HEK293 (cell line): ENCODE measurements at regions of chr22 and their contacts with region 1.

Region 1: DNA sequence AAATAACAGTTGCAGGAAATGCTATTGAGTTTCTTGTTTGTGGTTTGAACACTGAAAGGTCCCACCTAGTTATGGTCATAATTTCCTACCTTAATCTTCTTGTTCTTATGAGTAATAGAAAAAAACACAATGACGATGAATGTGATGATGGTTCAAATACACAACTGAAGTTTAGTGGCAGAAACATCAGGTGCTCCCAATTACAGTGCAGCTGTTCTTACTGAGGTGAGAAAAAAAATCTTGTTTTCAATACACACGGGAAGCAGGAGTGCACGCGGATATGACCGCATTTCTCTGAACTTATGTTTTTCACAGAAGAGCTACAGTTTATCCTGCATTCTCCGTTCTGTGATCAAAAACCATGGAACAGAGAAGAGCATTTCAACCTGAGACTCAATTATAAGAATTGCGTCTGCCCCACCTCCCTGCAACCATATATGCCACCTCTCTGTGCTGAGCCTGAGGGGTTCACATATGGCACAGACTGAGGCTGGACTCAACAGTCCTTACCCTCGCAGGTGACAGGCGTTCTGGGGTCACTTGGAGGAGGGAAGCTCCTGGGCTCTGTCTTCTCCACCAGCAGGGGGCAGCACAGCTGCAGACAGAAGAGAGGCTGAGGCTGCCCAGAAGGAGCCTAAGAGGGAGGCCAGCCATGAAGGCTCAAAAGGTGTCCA is 99.7 kb upstream of the IGLL5 start:
- H3K4me3 ChIP-seq: no peak overlapping the region
- H3K27ac ChIP-seq: no peak overlapping the region
- H3K4me1 ChIP-seq: no peaks in the 10 kb centered on the region
- CTCF ChIP-seq: 0 out of 2 replicates have a peak, but pooled peaks have one; percentile 38

Region 2: DNA sequence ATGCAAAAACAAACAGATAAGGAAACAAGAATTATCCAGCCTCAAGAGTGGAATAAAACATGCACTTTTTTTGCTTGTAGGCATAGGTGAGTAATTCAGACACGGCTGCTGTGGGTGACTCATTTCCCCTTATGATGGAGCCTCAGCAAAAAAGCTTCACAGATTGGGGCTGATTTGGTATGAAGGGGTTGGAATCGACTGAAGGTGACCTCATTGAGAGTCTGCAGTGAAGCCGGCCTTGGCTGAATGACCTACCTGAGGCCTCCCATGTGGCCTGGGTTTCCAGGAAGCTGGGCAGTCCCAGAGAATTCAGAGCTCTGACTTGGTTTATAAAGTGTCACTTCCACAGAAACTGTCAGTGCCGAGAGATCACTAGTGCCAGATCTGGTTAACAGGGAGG is 577.5 kb before region 1 on chr22:
- CTCF ChIA-PET with region 1: no interaction called
- POLR2A ChIA-PET with region 1: no interaction called
- H3K4me3 ChIP-seq: no peak overlapping the region
- H3K27ac ChIP-seq: no peak overlapping the region
- H3K4me1 ChIP-seq: no peaks in the 10 kb centered on the region
- CTCF ChIP-seq: no peak

Region 3: DNA sequence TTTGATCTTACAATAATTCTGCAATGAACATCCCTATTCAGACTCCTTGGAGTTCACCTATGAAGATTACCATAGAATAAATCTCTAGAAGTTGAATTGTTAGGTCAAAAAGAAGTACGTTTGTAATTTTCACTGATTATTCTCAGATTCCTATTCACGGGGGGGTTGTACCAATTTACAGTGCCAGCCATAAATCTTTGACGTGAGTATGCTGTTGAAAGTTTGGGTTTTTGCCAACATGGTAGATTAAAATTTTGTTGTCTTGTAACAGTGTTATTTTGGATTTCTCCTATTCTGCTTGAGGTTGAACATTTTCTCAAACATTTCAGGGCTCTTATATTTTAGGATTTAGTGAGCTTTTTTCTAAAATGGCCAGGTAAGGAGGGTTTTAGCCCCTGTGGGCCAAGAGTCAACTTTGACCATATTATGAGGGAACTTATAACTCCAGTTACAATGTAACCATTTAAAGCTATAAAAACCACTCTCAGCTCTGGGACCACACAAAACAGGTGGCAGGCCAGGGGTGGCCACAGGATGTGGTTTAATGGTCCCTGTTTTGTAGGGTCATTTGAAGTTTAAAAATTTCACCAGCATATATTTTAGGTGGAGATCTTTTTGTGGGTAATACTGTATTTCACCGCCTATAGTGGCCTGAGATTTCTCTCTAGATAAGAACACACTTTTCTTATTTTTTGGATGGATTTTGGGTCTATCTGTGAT is 117.7 kb before region 1 on chr22:
- CTCF ChIA-PET with region 1: no interaction called
- POLR2A ChIA-PET with region 1: no interaction called
- H3K4me3 ChIP-seq: no peak overlapping the region
- H3K27ac ChIP-seq: no peak overlapping the region
- H3K4me1 ChIP-seq: no peaks in the 10 kb centered on the region
- CTCF ChIP-seq: no peak

Region 4: GRCh38 chr22:22753526-22754267 is 34.2 kb before region 1 on chr22:
- CTCF ChIA-PET with region 1: interaction called, 15 read pairs
- POLR2A ChIA-PET with region 1: no interaction called
- H3K4me3 ChIP-seq: no peak overlapping the region
- H3K27ac ChIP-seq: no peak overlapping the region
- H3K4me1 ChIP-seq: no peaks in the 10 kb centered on the region
- CTCF ChIP-seq: peak; percentile 57; the same call in 1 of the 2 replicates

Region 5: GRCh38 chr22:22802339-22802970 is 14.5 kb after region 1 on chr22:
- CTCF ChIA-PET with region 1: interaction called, 41 read pairs
- POLR2A ChIA-PET with region 1: no interaction called
- H3K4me3 ChIP-seq: no peak overlapping the region
- H3K27ac ChIP-seq: no peak overlapping the region
- H3K4me1 ChIP-seq: no peaks in the 10 kb centered on the region
- CTCF ChIP-seq: no peak

Region 6: DNA sequence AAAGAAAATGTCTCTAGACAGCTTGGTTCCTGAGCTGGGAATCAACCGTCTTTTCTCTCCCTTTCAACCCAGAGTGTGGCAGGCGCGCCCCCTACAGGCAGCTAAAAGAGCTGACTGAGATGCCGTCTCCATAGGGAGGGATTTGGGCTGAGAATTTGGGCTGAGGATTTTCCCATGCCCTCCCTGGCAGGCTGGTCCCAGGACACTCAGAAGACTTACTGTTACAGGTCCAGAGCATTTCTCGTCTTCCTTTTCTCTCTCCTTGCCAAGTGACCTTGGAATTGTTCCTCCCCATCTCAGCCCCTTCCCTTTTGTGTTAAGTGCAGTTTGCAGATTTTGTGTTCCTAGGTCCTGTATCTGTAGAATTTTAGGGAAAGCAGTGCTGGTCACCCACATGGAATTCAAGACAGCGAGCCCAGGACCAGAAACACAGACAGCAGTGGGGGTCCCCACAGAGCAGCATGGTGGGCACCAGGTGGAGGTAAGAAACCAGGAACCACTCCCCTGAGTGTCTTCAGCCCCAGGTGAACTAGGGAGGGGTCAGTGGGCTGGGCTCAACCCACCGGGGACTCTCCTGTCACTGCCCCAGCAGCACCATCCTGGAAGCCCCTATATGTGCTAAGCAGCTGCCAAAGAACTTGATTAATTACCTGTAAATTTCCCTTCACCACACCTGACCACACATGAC is 89.7 kb after region 1 on chr22:
- CTCF ChIA-PET with region 1: interaction called, 65 read pairs
- POLR2A ChIA-PET with region 1: no interaction called
- H3K4me3 ChIP-seq: no peak overlapping the region
- H3K27ac ChIP-seq: no peak overlapping the region
- H3K4me1 ChIP-seq: no peaks in the 10 kb centered on the region
- CTCF ChIP-seq: peak; percentile 32; the same call in 1 of the 2 replicates

Region 7: GRCh38 chr22:23023294-23023693 is 235.4 kb after region 1 on chr22:
- CTCF ChIA-PET with region 1: no interaction called
- POLR2A ChIA-PET with region 1: no interaction called
- H3K4me3 ChIP-seq: no peak overlapping the region
- H3K27ac ChIP-seq: no peak overlapping the region
- H3K4me1 ChIP-seq: no peaks in the 10 kb centered on the region
- CTCF ChIP-seq: no peak